Activated naive CD4-positive, alpha-beta T cell treated with anti-CD3 and anti-CD28 coated beads for 36 hours (primary cell): ENCODE measurements at regions of chr4 and their contacts with region 1.

Region 1: DNA sequence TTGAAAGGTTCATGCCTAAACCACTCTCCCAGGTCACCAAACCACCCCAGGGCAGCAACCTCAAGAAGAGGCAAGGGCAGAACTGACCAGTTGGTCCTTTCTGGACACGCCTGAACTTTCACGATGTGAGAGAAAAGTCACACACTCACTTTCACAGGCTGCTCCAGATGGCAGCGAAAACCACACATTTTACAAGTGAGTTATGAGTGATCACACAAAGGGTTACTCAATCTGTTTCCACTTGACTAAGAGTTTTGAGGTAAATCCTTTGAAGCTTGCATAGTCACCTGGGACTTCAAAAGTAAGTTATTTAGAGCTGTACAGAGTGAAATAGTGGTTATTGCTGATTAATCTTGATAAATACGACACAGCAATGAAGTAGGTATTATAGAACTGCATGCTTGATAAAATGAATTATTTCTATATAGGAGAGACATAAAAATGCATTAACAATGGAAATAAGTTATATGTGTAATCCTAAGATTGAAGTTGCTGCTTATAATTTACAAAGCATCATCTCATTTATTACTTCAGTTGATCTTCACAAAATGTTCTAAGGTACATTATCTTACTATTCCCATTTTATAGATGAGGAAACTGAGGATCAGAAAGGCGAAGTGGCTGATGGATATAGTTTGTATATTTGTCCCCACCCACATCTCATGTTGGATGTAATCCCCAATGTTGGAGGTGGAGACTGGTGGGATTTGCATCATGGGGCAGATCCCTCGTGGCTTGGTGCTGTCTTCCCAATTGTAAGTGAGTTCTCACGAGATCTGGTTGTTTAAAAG is 103.0 kb upstream of the KLF3 start:
- DNase-seq: peak; percentile 60
- H3K4me3 Mint-ChIP-seq: no peak overlapping the region
- H3K27ac Mint-ChIP-seq: no peak overlapping the region
- H3K4me1 Mint-ChIP-seq: peaks cover 16% of the 10 kb centered on the region
- H3K27me3 Mint-ChIP-seq: peaks cover 2% of the 10 kb centered on the region

Region 2: DNA sequence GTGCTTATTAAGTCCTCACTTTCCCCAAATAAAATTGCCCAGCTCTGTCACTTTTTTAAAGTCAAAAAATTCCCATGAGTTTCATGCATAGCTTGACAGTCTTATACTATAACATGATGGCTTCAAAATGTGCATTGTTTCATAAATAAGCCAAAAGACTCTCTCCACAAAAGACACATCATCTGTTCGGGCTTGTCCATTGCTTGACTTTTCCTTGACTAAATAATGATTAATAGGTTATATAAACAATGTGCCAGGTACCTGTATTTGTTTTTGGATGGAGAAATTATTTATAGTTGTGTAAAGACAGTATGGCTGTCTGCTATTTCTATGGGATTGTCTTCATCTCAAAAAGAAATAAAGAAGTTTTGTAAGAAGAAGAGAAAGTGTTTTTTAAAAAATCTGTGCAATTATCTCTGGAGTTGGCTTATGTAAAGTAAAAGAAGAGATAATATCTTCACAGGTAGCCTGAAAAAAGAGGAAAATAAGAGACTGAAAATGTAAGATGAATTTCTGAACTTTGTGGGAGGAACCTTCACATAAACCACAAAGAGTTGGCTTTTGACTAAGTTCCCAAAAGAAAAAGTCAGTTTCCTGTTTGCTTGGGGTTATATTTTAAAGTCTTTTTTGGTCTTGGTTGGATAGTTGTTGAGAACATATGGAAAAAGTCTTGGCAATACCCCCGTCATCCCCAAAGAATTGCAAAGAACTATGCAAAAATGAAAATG is 226.0 kb before region 1 on chr4:
- CTCF ChIA-PET with region 1: no interaction called
- intact Hi-C with region 1: no loop called
- DNase-seq: no peak
- H3K4me3 Mint-ChIP-seq: no peak overlapping the region
- H3K27ac Mint-ChIP-seq: no peak overlapping the region
- H3K4me1 Mint-ChIP-seq: peaks cover 52% of the 10 kb centered on the region
- H3K27me3 Mint-ChIP-seq: no peaks in the 10 kb centered on the region

Region 3: GRCh38 chr4:38529189-38530115 is 31.5 kb before region 1 on chr4:
- CTCF ChIA-PET with region 1: no interaction called
- intact Hi-C with region 1: loop called (anchors 2 kb)
- DNase-seq: peak; percentile 74
- H3K4me3 Mint-ChIP-seq: no peak overlapping the region
- H3K27ac Mint-ChIP-seq: peak overlapping the region; percentile 64
- H3K4me1 Mint-ChIP-seq: peaks cover 17% of the 10 kb centered on the region
- H3K27me3 Mint-ChIP-seq: no peaks in the 10 kb centered on the region

Region 4: GRCh38 chr4:38647101-38647819 is 86.3 kb after region 1 on chr4:
- CTCF ChIA-PET with region 1: no interaction called
- intact Hi-C with region 1: no loop called
- DNase-seq: no peak
- H3K4me3 Mint-ChIP-seq: no peak overlapping the region
- H3K27ac Mint-ChIP-seq: no peak overlapping the region
- H3K4me1 Mint-ChIP-seq: peaks cover 7% of the 10 kb centered on the region
- H3K27me3 Mint-ChIP-seq: no peaks in the 10 kb centered on the region

Region 5: DNA sequence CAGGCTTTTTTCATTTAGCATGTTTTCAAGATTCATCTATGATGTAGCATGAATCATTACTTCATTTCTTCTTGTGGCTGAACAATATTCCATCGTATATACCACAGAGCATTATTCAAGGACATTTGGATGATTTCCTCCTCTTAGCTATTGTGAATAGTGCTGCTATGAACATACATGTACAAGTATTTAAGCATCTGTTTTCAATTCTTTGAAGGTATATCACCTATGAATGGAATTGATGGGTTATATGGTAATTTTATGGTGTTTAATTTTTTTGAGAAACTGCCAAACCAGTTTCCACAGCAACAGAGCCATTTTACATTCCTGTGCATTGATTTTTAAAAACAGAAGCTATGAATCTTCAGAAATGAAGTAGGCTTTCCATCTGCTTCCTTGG is 585.2 kb after region 1 on chr4:
- CTCF ChIA-PET with region 1: no interaction called
- intact Hi-C with region 1: no loop called
- DNase-seq: no peak
- H3K4me3 Mint-ChIP-seq: no peak overlapping the region
- H3K27ac Mint-ChIP-seq: no peak overlapping the region
- H3K4me1 Mint-ChIP-seq: peaks cover 4% of the 10 kb centered on the region
- H3K27me3 Mint-ChIP-seq: no peaks in the 10 kb centered on the region